PC-3 (cell line): ENCODE measurements at regions of chr1 and their contacts with region 1.

Region 1: GRCh38 chr1:23074012-23074411 is 54.7 kb downstream of the KDM1A start:
- DNase-seq: peak; percentile 76
- ATAC-seq: peak; percentile 86
- H3K4me3 ChIP-seq: 0 out of 2 replicates have a peak overlapping the region, but pooled peaks have one; percentile 15
- H3K27ac ChIP-seq: peak overlapping the region; percentile 92
- H3K4me1 ChIP-seq: peaks cover 40% of the 10 kb centered on the region
- H3K27me3 ChIP-seq: no peaks in the 10 kb centered on the region
- CTCF ChIP-seq: no peak

Region 2: DNA sequence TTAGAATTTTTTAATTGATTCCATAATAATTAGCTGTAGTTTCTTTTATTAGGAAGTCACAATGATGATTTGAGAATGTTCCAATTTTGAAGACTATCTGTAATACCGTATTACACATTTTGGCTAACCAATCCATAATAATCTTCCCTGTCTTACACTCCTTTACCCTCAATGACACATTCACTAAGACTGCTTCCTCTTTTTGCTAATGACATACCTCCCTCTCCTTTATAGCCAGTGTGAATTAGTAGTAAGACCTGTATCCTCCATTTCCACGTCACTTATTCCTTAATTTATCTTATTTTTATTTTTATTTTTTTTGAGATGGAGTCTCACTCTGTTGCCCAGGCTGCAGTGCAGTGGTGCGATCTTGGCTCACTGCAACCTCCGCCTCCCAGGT is 44.7 kb before region 1 on chr1:
- CTCF ChIA-PET with region 1: no interaction called
- POLR2A ChIA-PET with region 1: no interaction called
- intact Hi-C with region 1: loop called (anchors 2 kb)
- DNase-seq: no peak
- ATAC-seq: no peak
- H3K4me3 ChIP-seq: no peak overlapping the region
- H3K27ac ChIP-seq: no peak overlapping the region
- H3K4me1 ChIP-seq: 0 out of 2 replicates have a peak, but pooled peaks cover 6% of the 10 kb centered on the region
- H3K27me3 ChIP-seq: no peaks in the 10 kb centered on the region
- CTCF ChIP-seq: no peak

Region 3: GRCh38 chr1:23062271-23062670 is 11.7 kb before region 1 on chr1:
- CTCF ChIA-PET with region 1: no interaction called
- POLR2A ChIA-PET with region 1: interaction called, 15 read pairs
- intact Hi-C with region 1: no loop called
- DNase-seq: no peak
- ATAC-seq: no peak
- H3K4me3 ChIP-seq: no peak overlapping the region
- H3K27ac ChIP-seq: no peak overlapping the region
- H3K4me1 ChIP-seq: no peaks in the 10 kb centered on the region
- H3K27me3 ChIP-seq: no peaks in the 10 kb centered on the region
- CTCF ChIP-seq: no peak

Region 4: GRCh38 chr1:23140940-23141596 is 67.1 kb after region 1 on chr1:
- CTCF ChIA-PET with region 1: no interaction called
- POLR2A ChIA-PET with region 1: no interaction called
- intact Hi-C with region 1: no loop called
- DNase-seq: no peak
- ATAC-seq: no peak
- H3K4me3 ChIP-seq: no peak overlapping the region
- H3K27ac ChIP-seq: no peak overlapping the region
- H3K4me1 ChIP-seq: no peaks in the 10 kb centered on the region
- H3K27me3 ChIP-seq: no peaks in the 10 kb centered on the region
- CTCF ChIP-seq: no peak

Region 5: GRCh38 chr1:23168457-23169194 is 94.6 kb after region 1 on chr1 and contains the start of gene LUZP1:
- CTCF ChIA-PET with region 1: no interaction called
- POLR2A ChIA-PET with region 1: interaction called, 20 read pairs
- intact Hi-C with region 1: no loop called
- DNase-seq: peak; percentile 82
- ATAC-seq: peak; percentile 74
- H3K4me3 ChIP-seq: peak within 1 kb of the TSS; percentile 98
- H3K27ac ChIP-seq: peak within 1 kb of the TSS; percentile 61
- H3K4me1 ChIP-seq: peaks cover 12% of the 10 kb centered on the region; the same call in 1 of the 2 replicates
- H3K27me3 ChIP-seq: no peaks in the 10 kb centered on the region
- CTCF ChIP-seq: no peak
- total RNA-seq, gene LUZP1: 17.5 and 17.8 TPM in 2 replicates